ENCODE measurements at regions of chr12 and their contacts with region 1.

Region 1: DNA sequence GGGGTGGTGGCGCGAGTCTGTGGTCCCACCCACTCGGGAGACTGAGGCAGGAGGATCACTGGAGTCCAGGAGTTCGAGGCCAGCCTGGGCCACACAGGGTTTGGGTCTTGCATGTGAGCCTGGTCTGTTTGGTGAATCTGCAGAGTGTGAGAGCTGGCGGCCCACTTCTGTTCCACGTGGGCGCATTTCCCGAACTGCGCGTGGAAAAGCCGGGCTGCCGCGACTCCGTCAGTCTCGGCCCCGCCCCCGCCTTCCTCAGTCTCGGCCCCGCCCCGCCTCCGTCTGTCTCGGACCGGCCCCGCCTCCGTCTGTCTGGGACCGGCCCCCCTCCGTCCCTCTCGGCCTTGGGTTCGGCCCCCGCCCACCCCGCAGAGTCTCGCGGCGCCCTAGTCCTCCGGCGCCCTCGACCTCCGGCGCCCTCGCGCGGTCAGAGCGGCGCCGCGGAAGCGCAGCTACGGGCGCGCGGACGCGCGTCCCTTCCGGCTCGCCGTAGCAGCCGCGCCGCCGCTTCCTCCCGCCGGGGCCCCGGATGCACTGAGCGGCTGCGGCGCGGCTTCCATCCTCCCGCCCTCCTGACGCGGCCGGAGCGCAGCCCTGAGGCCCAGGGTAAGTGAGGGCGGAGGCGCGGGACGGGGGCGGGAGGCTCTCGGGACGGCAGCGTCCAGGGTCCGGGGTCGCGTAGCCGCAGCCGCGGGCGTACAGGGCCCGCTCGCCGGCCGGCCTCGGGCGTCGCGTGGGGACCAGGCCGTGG is at the start of gene EP400:
- DNase-seq: peak; percentile 86 to 95 (median 91)
- H3K4me3 ChIP-seq: peak within 1 kb of the TSS; percentile 69 to 100 (median 93)
- H3K27ac ChIP-seq: peak within 1 kb of the TSS in 56 of 59 donors; percentile 5 to 90 (median 75)
- H3K27me3 ChIP-seq: no peaks in the 10 kb centered on the region
- CTCF ChIP-seq: peak in 55 of 56 donors; percentile 26 to 83 (median 59)
- total RNA-seq, gene EP400: 52.1 to 79.5 (median 64.6) TPM

Region 2: DNA sequence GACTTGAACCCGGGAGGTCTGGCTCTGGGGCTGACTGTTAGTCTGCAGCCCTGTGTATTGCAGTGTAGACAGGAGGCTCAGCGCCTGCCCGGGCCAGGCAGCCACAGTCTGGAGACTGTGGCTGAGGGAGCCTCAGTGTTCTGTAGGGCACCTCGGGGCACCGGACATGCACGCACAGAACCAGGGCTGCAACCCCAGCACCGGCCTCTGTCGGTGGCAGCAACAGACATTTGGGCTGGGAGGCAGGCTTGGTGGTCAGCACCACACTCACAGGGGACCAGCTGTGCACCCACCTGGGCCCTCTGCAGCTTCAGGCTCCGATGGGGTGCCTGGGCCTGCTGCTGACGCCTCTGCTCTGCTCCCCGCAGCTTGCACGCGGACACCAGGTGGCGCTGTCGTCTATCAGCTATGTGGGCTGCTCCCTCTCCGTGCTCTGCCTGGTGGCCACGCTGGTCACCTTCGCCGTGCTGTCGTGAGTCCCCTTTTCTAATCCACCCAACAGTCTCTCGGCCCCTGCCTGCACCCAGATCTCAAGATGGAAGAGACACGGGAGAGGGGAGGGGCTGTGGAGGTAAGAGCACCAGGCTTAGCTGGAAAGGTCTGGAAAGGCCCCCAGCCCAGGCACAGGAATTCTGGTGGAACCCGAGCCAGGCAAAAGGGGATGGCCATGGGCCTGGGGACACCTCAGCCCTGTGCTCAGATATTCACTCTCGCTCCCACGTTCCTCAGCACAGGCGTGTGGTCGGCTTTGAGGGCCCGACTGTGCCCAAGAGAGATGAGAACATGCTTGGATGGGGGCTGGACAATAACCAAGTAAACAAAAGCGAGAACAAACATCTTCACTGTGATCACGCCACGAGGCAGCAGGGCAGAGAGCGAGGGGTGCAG is 844.9 kb before region 1 on chr12:
- intact Hi-C with region 1: loop called in 1 of 2 experiments (anchors 5 kb)
- DNase-seq: peak; percentile 74 to 94 (median 90)
- H3K4me3 ChIP-seq: peak overlapping the region in 5 of 59 donors; percentile 10 to 28 (median 21)
- H3K27ac ChIP-seq: peak overlapping the region in 52 of 59 donors; percentile 20 to 88 (median 68)
- H3K27me3 ChIP-seq: peaks cover 0 to 3% (median 0%) of the 10 kb centered on the region in 45 donors
- CTCF ChIP-seq: peak; percentile 78 to 99 (median 96)

Region 3: DNA sequence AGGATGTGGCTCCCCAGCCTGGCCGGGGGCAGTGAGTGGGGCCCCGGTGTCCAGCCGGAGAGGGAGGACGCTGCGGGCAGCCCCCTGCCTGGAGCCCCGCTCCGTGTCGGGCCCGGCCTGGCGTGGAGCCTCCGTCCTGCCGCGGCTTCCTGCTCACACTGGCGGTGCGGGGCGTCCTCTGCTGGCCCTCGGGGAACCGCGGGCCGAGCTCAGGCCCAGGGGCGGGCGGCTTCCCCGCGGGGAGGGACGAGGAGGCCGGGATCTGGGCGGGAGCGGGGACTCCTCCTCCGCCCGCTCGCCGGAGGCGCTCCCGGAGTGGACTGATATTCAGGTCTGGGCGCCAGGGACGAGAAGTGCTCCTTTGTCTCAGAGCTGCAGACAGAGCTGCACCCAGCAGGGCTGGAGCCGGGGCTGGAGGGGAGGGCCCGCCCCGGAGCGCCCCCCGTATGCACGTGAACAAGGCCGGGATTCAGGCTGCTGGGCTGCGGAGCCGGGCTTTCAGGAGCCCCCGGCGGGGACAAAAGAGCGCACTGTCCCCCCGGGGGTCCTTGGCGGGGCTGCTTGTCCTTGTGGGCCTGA is 119.2 kb before region 1 on chr12:
- intact Hi-C with region 1: loop called (anchors 5 kb)
- DNase-seq: peak; percentile 56 to 92 (median 83)
- H3K4me3 ChIP-seq: peak overlapping the region; percentile 39 to 84 (median 68)
- H3K27ac ChIP-seq: peak overlapping the region; percentile 30 to 94 (median 85)
- H3K27me3 ChIP-seq: peaks cover 0 to 22% (median 0%) of the 10 kb centered on the region in 45 donors
- CTCF ChIP-seq: peak in 55 of 56 donors; percentile 46 to 88 (median 71)

Region 4: GRCh38 chr12:131894313-131894860 is 55.2 kb before region 1 on chr12 and contains the start of gene ULK1:
- intact Hi-C with region 1: loop called (anchors 5 kb)
- DNase-seq: peak; percentile 86 to 97 (median 92)
- H3K4me3 ChIP-seq: peak within 1 kb of the TSS; percentile 54 to 92 (median 71)
- H3K27ac ChIP-seq: peak within 1 kb of the TSS in 58 of 59 donors; percentile 49 to 99 (median 95)
- H3K27me3 ChIP-seq: no peaks in the 10 kb centered on the region
- CTCF ChIP-seq: peak in 5 of 56 donors; percentile 8 to 20 (median 12)
- total RNA-seq, gene ULK1: 43.7 to 169 (median 98.4) TPM

Region 5: DNA sequence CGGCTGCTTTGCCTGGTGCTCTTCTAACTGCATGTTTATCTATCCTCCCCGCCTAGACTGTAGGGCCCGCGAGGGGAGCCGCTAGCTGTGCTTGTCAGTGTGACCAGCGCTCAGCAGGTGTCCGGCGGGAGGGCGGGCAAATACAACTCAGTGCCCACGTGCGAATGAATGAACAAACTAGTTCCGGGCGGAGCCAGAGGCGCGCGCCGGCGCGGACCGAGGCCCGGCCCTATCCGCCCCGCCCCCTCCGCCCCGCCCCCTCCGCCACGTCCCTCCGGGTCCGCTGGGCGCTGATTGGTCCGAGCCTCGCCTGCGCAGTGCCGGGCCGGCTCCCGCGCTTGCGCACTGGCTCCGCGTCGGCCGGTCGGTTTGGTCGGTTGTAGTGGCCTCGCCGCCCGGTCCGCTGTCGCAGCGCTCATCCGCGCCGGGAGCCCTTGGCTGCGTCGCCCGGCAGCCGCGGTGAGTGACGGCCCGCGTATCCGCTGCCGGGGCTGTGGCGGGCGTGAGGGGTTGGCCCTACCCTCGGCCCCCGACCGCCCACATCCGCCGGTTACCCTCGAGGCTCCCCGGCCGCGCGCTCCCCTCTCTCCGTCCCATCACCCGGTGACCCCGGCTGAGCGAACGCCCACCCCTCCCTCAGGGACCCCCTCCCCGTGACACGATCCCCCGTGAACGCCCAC is 134.5 kb after region 1 on chr12:
- intact Hi-C with region 1: loop called in 1 of 2 experiments (anchors 10 kb)
- DNase-seq: peak; percentile 85 to 96 (median 88)
- H3K4me3 ChIP-seq: peak overlapping the region; percentile 71 to 98 (median 90)
- H3K27ac ChIP-seq: peak overlapping the region in 49 of 59 donors; percentile 18 to 88 (median 72)
- H3K27me3 ChIP-seq: no peaks in the 10 kb centered on the region
- CTCF ChIP-seq: peak in 15 of 56 donors; percentile 9 to 46 (median 21)